ENCODE measurements at regions of chr20 and their contacts with region 1.

Region 1: DNA sequence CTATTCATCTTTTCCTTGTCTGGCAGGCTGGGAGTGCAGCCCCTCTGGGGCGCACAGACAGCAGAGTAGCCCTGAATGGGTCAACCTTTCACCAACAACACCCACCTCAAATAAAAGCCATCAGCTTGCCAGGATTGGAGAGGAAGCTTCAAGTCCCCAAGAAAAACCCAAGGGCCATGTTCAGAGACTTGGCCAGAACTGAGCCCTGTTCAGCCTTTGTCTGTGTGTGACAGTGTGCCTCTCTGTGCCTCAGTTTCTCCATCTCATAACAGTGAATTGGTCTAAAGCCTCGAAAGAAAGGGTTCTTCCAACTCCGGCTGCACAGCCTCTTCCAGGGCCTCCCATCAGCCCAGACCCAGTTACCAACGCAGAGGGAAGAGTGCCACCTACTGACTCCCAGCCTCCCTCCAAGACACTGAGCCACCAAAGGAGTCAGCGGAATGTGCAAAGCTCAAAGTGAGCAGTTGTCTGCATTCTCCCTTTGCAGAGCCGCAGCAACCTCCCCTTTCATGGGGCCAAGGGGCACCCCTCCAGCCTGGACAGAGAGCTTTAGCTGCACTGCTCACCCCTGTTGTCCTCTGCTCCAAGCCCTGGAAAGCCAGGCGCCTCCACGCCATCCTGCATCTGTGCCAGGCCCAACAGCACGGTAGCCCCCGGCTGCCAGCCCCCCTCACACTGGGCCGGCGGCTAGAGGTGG is 82.7 kb upstream of the TOP1 start:
- DNase-seq: peak in 1 of 2 donors; percentile 46
- ATAC-seq: peak in 1 of 3 donors; percentile 69
- H3K4me3 ChIP-seq: no peak overlapping the region
- H3K4me3 Mint-ChIP-seq: no peak overlapping the region
- H3K27ac ChIP-seq: no peak overlapping the region
- H3K27ac Mint-ChIP-seq: no peak overlapping the region
- H3K4me1 ChIP-seq: no peaks in the 10 kb centered on the region
- H3K4me1 Mint-ChIP-seq: peaks cover 7% of the 10 kb centered on the region in 2 donors
- H3K27me3 ChIP-seq: no peaks in the 10 kb centered on the region
- H3K27me3 Mint-ChIP-seq: peaks cover 4 to 5% of the 10 kb centered on the region in 2 donors
- CTCF ChIP-seq: peak; percentile 37

Region 2: DNA sequence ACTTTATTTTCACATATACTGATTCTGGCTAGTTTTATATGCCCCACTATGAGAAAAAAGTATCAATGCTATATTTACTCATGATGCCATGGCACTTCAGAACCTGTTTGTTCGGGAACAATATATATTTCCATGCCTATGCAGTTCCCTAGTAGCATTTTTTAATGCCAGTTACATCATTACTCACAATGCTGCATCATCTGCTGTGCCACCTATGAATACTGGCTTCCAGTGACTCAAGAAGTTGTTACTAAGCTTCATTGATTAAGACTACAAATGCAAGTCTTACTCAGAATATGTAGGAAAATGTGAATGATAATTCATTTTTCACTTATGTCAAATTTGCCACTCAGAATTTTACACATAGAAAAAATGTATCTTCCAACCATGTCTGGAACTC is 354.8 kb before region 1 on chr20:
- intact Hi-C with region 1: no loop called
- DNase-seq: no peak
- ATAC-seq: no peak
- H3K4me3 ChIP-seq: no peak overlapping the region
- H3K4me3 Mint-ChIP-seq: no peak overlapping the region
- H3K27ac ChIP-seq: no peak overlapping the region
- H3K27ac Mint-ChIP-seq: no peak overlapping the region
- H3K4me1 ChIP-seq: no peaks in the 10 kb centered on the region
- H3K4me1 Mint-ChIP-seq: no peaks in the 10 kb centered on the region
- H3K27me3 ChIP-seq: no peaks in the 10 kb centered on the region
- H3K27me3 Mint-ChIP-seq: peaks cover 22 to 25% of the 10 kb centered on the region in 2 donors
- CTCF ChIP-seq: no peak

Region 3: GRCh38 chr20:40741507-40742106 is 204.3 kb before region 1 on chr20:
- intact Hi-C with region 1: loop called (anchors 1 kb)
- DNase-seq: peak; percentile 28 to 66
- ATAC-seq: peak in 2 of 3 donors; percentile 52 to 65
- H3K4me3 ChIP-seq: no peak overlapping the region
- H3K4me3 Mint-ChIP-seq: no peak overlapping the region
- H3K27ac ChIP-seq: no peak overlapping the region
- H3K27ac Mint-ChIP-seq: no peak overlapping the region
- H3K4me1 ChIP-seq: peaks cover 6% of the 10 kb centered on the region
- H3K4me1 Mint-ChIP-seq: peaks cover 0 to 13% of the 10 kb centered on the region in 2 donors
- H3K27me3 ChIP-seq: no peaks in the 10 kb centered on the region
- H3K27me3 Mint-ChIP-seq: peaks cover 22 to 38% of the 10 kb centered on the region in 2 donors
- CTCF ChIP-seq: peak; percentile 75

Measured in natural killer cell (primary cell).